ENCODE measurements at regions of chr9 and their contacts with region 1.

Region 1: GRCh38 chr9:4315582-4316215 is 15.8 kb upstream of the GLIS3 start:
- DNase-seq: peak; percentile 67 to 76
- H3K4me3 ChIP-seq: no peak overlapping the region
- H3K4me3 Mint-ChIP-seq: no peak overlapping the region
- H3K27ac Mint-ChIP-seq: no peak overlapping the region
- H3K4me1 ChIP-seq: no peaks in the 10 kb centered on the region
- H3K4me1 Mint-ChIP-seq: no peaks in the 10 kb centered on the region
- H3K27me3 ChIP-seq: no peaks in the 10 kb centered on the region
- H3K27me3 Mint-ChIP-seq: peaks cover 2% of the 10 kb centered on the region
- CTCF ChIP-seq: peak; percentile 69 to 90

Region 2: DNA sequence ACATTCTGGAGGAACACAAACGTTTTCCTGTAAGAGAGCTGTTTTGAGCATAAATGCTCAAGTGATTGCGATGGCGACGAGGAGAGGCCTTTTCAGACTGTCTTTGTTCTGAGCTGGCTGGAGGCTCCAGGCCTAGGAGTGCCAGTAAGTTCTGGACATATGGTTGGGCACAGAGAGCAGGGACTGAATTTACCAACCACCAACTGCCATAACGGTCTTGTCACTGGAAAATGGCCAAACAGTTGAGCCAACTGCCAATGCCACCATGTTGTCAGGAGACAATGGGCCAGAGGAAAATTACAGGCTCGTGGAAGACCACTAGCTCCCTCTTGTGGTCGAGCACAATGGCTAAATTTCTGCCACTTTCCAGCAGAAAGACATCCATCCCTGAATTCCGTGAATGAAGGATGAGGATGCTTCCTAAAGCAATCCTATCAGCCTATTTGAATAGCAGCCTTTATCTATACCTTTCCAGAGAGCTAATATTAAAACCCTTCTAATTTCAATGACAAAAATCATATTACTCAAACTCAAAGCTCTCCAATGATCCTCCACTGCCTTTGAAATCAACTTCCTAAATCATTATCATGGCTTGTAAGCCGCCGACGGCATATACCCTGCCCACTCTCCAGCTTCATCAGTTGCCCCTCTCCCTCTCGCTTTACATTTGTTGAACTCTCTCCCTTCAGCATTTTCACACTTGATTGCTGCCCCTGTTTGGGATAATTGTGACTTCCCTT is 51.1 kb after region 1 on chr9:
- CTCF ChIA-PET with region 1: interaction called, 3 read pairs
- POLR2A ChIA-PET with region 1: no interaction called
- intact Hi-C with region 1: loop called (anchors 1 kb)
- DNase-seq: peak; percentile 38 to 53
- H3K4me3 ChIP-seq: no peak overlapping the region
- H3K4me3 Mint-ChIP-seq: no peak overlapping the region
- H3K27ac Mint-ChIP-seq: no peak overlapping the region
- H3K4me1 ChIP-seq: no peaks in the 10 kb centered on the region
- H3K4me1 Mint-ChIP-seq: no peaks in the 10 kb centered on the region
- H3K27me3 ChIP-seq: no peaks in the 10 kb centered on the region
- H3K27me3 Mint-ChIP-seq: no peaks in the 10 kb centered on the region
- CTCF ChIP-seq: peak; percentile 62 to 69

Region 3: DNA sequence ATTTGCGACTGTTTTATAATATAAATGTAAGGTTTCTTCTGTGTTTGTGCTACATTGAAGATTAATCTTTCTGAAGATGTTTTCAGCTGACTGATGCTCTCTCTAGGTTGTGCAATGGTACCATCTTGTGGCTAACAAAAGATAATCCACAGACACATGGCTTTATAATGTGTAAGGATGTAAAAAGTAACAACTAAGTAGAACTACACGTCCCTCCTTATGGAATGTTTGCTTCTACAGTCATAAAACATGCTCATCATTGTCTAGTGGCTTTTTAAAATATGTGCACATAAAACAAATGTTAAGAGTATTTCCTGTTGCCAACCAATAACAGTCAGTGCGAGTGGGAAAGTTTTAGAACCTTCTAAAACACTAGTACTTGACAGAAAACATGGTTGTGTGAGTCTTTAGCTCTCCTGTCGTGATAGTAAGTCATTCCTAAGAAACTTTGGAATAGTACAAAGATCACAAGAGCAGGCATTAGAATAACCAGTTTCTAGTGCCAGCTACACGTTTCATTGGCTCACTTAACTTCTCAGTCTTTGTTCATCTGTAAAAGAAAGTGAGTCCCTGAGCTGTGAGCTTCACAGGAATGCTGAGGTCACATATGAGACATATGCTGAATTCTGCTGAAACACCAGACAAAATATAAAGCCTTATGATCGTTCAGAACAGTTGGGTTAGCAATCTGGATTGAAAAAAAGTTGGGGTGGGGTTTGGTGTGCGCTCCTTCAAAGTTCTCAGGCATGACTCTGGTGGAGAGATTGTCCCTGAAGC is 59.9 kb after region 1 on chr9:
- CTCF ChIA-PET with region 1: interaction called, 6 read pairs
- POLR2A ChIA-PET with region 1: no interaction called
- intact Hi-C with region 1: loop called (anchors 2 kb)
- DNase-seq: peak in 1 of 2 experiments; percentile 7
- H3K4me3 ChIP-seq: no peak overlapping the region
- H3K4me3 Mint-ChIP-seq: no peak overlapping the region
- H3K27ac Mint-ChIP-seq: no peak overlapping the region
- H3K4me1 ChIP-seq: peaks cover 6% of the 10 kb centered on the region; the same call in 1 of the 2 replicates
- H3K4me1 Mint-ChIP-seq: no peaks in the 10 kb centered on the region
- H3K27me3 ChIP-seq: no peaks in the 10 kb centered on the region
- H3K27me3 Mint-ChIP-seq: no peaks in the 10 kb centered on the region
- CTCF ChIP-seq: peak in 1 of 2 experiments; percentile 18

Region 4: DNA sequence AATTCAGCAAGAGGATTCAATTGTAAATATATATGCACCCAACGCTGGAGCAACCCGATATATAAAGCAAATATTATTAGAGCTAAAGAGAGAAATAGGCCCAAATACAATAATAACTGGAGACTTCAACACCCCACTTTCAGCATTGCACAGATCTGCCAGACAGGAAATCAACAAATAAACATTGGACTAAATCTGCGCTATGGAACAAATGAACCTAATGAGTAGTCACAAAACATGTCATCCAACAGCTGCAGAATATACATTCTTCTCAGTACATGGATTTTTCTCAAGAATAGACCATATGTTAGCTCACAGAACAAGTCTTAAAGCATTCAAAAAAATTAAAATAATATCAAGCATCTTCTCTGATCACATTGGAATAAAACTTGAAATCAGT is 88.5 kb after region 1 on chr9:
- CTCF ChIA-PET with region 1: no interaction called
- POLR2A ChIA-PET with region 1: no interaction called
- intact Hi-C with region 1: no loop called
- DNase-seq: no peak
- H3K4me3 ChIP-seq: no peak overlapping the region
- H3K4me3 Mint-ChIP-seq: no peak overlapping the region
- H3K27ac Mint-ChIP-seq: no peak overlapping the region
- H3K4me1 ChIP-seq: no peaks in the 10 kb centered on the region
- H3K4me1 Mint-ChIP-seq: no peaks in the 10 kb centered on the region
- H3K27me3 ChIP-seq: no peaks in the 10 kb centered on the region
- H3K27me3 Mint-ChIP-seq: no peaks in the 10 kb centered on the region
- CTCF ChIP-seq: no peak

Region 5: DNA sequence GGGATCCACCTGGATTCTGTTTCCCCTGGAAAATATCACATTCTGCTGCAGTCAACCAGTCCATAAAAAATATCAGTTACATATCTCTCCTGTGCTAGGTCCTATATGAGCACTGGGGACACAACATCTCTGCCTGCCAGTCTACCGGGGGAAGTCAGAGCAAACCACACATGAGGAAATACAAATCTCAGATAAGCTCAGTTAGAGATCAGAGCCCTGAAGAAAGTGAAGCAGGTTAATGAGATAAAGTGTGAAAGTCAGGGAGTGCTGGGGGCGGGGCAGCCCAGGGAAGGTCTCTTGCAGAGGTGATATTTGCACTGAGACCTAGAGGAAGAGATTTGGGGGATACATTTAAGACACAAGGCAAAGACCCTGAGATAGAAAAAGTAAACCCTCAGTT is 106.8 kb after region 1 on chr9:
- CTCF ChIA-PET with region 1: no interaction called
- POLR2A ChIA-PET with region 1: no interaction called
- intact Hi-C with region 1: no loop called
- DNase-seq: no peak
- H3K4me3 ChIP-seq: no peak overlapping the region
- H3K4me3 Mint-ChIP-seq: no peak overlapping the region
- H3K27ac Mint-ChIP-seq: peak overlapping the region; percentile 79
- H3K4me1 ChIP-seq: peaks cover 42% of the 10 kb centered on the region
- H3K4me1 Mint-ChIP-seq: peaks cover 26% of the 10 kb centered on the region
- H3K27me3 ChIP-seq: no peaks in the 10 kb centered on the region
- H3K27me3 Mint-ChIP-seq: no peaks in the 10 kb centered on the region
- CTCF ChIP-seq: no peak

Region 6: DNA sequence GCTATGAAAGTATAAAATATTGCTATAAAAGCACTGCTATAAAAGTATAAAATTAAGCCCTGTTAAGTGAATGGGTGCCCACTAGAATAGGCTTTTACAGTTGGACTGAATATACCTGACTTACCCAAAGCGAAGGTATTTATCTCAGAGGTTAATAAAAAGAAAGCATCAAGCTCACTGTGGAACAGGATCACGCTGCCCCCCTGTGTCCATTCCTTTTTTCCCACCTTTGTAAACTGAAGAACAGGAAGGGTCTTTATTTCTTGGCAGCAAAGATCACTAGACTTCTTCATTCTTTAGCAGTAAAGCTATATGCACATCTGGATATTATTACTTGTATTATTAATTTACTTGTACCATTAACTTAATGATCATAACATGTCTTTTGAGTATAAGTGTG is 324.3 kb after region 1 on chr9:
- CTCF ChIA-PET with region 1: interaction called, 3 read pairs
- POLR2A ChIA-PET with region 1: no interaction called
- intact Hi-C with region 1: loop called (anchors 5 kb)
- DNase-seq: peak in 1 of 2 experiments; percentile 28
- H3K4me3 ChIP-seq: no peak overlapping the region
- H3K4me3 Mint-ChIP-seq: no peak overlapping the region
- H3K27ac Mint-ChIP-seq: no peak overlapping the region
- H3K4me1 ChIP-seq: no peaks in the 10 kb centered on the region
- H3K4me1 Mint-ChIP-seq: no peaks in the 10 kb centered on the region
- H3K27me3 ChIP-seq: no peaks in the 10 kb centered on the region
- H3K27me3 Mint-ChIP-seq: no peaks in the 10 kb centered on the region
- CTCF ChIP-seq: peak; percentile 21 to 45

Measured in Caco-2 (cell line).